HepG2 (cell line): ENCODE measurements at regions of chr13 and their contacts with region 1.

Region 1: DNA sequence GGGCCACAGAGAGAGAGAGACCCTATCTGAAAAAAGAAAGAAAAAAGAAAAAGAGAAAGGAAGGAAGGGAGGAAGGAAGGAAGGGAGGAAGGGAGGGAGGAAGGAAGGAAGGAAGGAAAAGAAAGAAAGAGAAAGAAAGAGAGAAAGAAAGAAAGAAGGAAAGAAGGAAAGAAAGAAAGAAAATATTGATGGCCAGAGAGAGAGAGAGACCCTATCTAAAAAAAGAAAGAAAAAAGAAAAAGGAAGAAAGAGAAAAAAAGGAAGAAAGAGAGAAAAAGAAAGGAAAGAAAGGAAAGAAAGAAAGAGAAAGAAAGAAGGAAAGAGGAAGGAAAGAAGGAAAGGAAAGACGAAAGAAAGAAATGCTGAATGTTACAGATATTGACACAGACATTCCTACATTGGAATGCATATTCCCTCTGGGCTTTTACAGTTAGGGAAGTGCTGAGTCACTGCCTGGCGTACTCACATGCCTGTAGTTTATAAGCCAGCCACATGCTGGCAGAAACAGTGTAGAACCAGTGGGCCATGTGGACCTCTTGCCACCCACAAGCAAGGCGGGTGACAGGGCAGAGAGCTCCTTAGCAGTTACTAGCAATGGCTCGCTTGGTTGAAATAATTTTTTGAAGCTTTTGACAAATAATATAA is 34.6 kb upstream of the SLC46A3 start:
- DNase-seq: peak; percentile 75
- ATAC-seq: peak; percentile 95
- H3K4me3 ChIP-seq: no peak overlapping the region
- H3K27ac ChIP-seq: no peak overlapping the region
- H3K4me1 ChIP-seq: no peaks in the 10 kb centered on the region
- H3K27me3 ChIP-seq: no peaks in the 10 kb centered on the region; a peak in 1 of 5 replicates
- CTCF ChIP-seq: no peak
- EP300 ChIP-seq: no peak
- POLR2A ChIP-seq: no peak
- RAD21 ChIP-seq: no peak

Region 2: DNA sequence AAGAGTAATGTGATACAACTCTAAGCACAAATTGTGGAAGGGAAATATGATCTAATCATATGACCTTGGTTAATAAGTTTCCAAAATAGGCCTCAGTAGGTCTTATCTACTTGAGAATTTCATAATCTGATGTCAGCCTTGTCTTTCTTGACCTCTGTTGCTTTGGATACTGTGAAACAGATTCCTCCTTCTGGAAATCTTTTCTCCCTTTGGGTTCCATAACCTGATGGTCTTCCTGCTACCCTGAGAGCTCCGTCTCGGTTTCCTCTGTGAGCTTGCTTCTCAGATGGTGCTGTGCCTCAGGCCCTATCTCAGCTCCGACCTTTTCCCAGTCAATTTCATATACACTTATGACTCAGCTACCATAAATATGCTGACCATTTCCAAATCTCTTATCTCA is 28.3 kb before region 1 on chr13:
- CTCF ChIA-PET with region 1: no interaction called
- POLR2A ChIA-PET with region 1: no interaction called
- in situ Hi-C with region 1: no loop called
- intact Hi-C with region 1: no loop called
- DNase-seq: no peak
- ATAC-seq: no peak
- H3K4me3 ChIP-seq: no peak overlapping the region
- H3K27ac ChIP-seq: no peak overlapping the region
- H3K4me1 ChIP-seq: no peaks in the 10 kb centered on the region
- H3K27me3 ChIP-seq: no peaks in the 10 kb centered on the region; a peak in 2 of 5 replicates
- CTCF ChIP-seq: no peak
- EP300 ChIP-seq: no peak
- POLR2A ChIP-seq: no peak
- RAD21 ChIP-seq: no peak

Region 3: DNA sequence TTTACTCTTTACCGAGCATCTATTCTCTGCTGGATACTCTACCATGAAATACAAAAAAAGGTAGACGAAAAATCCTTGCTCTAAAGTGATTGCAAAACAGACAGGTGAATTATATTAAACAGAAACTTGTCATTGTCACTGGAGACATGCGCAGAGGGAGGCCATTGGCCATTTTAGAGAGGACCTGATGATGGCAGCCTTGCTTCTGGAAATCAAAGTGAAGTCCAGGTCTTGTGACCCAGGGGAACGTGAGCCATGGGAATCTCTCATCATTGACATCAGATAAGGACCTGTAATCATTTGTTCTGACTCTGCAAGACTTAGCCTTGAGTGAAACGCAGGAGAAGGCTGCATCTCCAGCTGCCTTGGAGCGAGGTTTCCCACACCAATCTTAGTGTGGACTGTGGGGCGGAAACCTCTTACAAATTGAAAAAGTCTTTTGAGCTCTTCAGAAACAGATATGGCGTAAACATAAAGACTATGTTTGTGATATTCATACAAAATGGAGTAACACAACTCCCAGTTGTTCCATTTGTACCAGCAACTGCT is 17.8 kb before region 1 on chr13:
- CTCF ChIA-PET with region 1: no interaction called
- POLR2A ChIA-PET with region 1: no interaction called
- in situ Hi-C with region 1: no loop called
- intact Hi-C with region 1: loop called (anchors 2 kb)
- DNase-seq: no peak
- ATAC-seq: no peak
- H3K4me3 ChIP-seq: no peak overlapping the region
- H3K27ac ChIP-seq: no peak overlapping the region
- H3K4me1 ChIP-seq: no peaks in the 10 kb centered on the region
- H3K27me3 ChIP-seq: no peaks in the 10 kb centered on the region; a peak in 2 of 5 replicates
- CTCF ChIP-seq: no peak
- EP300 ChIP-seq: no peak
- POLR2A ChIP-seq: no peak
- RAD21 ChIP-seq: no peak

Region 4: GRCh38 chr13:28778308-28779215 is 25.2 kb after region 1 on chr13:
- CTCF ChIA-PET with region 1: no interaction called
- POLR2A ChIA-PET with region 1: no interaction called
- in situ Hi-C with region 1: no loop called
- intact Hi-C with region 1: no loop called
- DNase-seq: no peak
- ATAC-seq: no peak
- H3K4me3 ChIP-seq: no peak overlapping the region
- H3K27ac ChIP-seq: no peak overlapping the region
- H3K4me1 ChIP-seq: no peaks in the 10 kb centered on the region
- H3K27me3 ChIP-seq: no peaks in the 10 kb centered on the region
- CTCF ChIP-seq: no peak
- EP300 ChIP-seq: no peak
- POLR2A ChIP-seq: no peak
- RAD21 ChIP-seq: no peak